ENCODE measurements at regions of chr9 and their contacts with region 1.

Region 1: GRCh38 chr9:80222466-80223169 is 650.9 kb downstream of the TLE4 start:
- DNase-seq: no peak
- ATAC-seq: no peak
- H3K4me3 ChIP-seq: no peak overlapping the region
- H3K4me1 ChIP-seq: no peaks in the 10 kb centered on the region
- CTCF ChIP-seq: no peak

Region 2: GRCh38 chr9:80259079-80259478 is 36.5 kb after region 1 on chr9:
- intact Hi-C with region 1: no loop called
- DNase-seq: no peak
- ATAC-seq: no peak
- H3K4me3 ChIP-seq: no peak overlapping the region
- H3K4me1 ChIP-seq: no peaks in the 10 kb centered on the region
- CTCF ChIP-seq: no peak

Region 3: DNA sequence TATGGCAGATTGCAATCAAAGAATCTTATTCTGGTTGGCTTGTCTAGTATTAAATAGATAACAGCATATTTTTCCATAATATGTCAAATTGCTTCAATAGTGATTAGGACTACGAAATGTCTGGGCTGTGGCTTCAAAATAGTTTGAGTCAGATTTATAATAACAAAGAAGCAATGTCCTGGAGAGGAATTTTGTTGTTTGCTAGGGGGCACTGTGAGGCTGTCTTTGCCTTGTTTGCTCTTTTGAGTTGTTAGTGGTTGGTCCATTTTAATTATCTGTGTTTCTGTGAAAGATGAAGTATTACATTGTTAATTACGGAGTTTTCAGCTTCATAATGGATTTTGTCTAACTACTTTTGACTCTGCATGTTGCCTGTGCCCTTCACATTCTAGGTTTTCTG is 62.7 kb after region 1 on chr9:
- intact Hi-C with region 1: loop called in 1 of 2 experiments (anchors 10 kb)
- DNase-seq: peak in 1 of 3 donors; percentile 1
- ATAC-seq: no peak
- H3K4me3 ChIP-seq: no peak overlapping the region
- H3K4me1 ChIP-seq: no peaks in the 10 kb centered on the region
- CTCF ChIP-seq: no peak

Measured in mucosa of descending colon (tissue), 3 donors.